Mammary epithelial cell (primary cell): ENCODE measurements at regions of chr4 and their contacts with region 1.

Region 1: GRCh38 chr4:38319456-38320342 is 344.3 kb upstream of the KLF3 start:
- DNase-seq: peak; percentile 84
- H3K4me3 ChIP-seq: no peak overlapping the region
- H3K27ac ChIP-seq: peak overlapping the region; percentile 79
- H3K4me1 ChIP-seq: peaks cover 26% of the 10 kb centered on the region
- H3K27me3 ChIP-seq: no peaks in the 10 kb centered on the region
- CTCF ChIP-seq: peak; percentile 98 to 99

Region 2: GRCh38 chr4:37826295-37827029 is 493.2 kb before region 1 on chr4 and contains the start of gene PGM2:
- CTCF ChIA-PET with region 1: no interaction called
- dilution Hi-C with region 1: no loop called
- in situ Hi-C with region 1: no loop called
- intact Hi-C with region 1: loop called (anchors 10 kb)
- DNase-seq: peak; percentile 83
- H3K4me3 ChIP-seq: peak within 1 kb of the TSS; percentile 73 to 97 (median 95)
- H3K27ac ChIP-seq: peak within 1 kb of the TSS; percentile 64
- H3K4me1 ChIP-seq: peaks cover 31% of the 10 kb centered on the region
- H3K27me3 ChIP-seq: no peaks in the 10 kb centered on the region
- CTCF ChIP-seq: no peak
- total RNA-seq, gene PGM2: 18.5 to 33.0 TPM

Region 3: DNA sequence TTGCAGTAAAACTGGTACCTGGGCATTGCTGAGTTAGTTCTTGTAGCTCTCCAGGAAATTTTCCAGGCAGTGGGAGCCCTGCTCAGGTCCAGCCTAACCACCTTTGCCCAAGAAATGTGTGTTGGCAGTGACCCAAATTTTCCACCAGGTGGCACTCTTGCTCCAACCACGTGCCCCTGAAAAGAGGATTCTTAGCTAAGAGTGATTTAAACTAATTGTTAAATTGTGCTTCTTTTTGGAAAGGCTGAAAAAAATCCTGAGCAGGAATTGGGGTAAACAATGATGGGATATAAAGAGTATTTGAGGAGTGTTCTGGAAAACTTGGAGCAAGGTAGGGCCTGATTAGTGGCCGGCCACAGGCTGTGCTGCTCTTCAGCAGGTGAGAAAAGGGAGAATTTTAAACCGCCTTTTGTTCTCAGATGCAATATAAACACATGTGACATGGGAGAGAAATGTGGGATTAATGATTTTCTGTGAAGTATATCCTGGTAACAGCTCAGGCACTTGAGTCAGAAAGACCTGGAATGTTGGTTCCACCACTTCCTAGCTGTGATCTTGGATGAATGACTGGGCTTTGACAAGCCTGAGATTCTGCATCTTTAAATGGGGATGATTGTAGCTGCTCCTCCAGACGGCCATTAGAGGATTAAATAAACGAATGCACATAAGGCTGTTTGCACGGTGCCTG is 139.9 kb before region 1 on chr4:
- CTCF ChIA-PET with region 1: interaction called, 4 read pairs
- dilution Hi-C with region 1: loop called (anchors 25 kb)
- in situ Hi-C with region 1: loop called (anchors 5 kb)
- intact Hi-C with region 1: loop called (anchors 1 kb)
- DNase-seq: peak; percentile 74
- H3K4me3 ChIP-seq: no peak overlapping the region
- H3K27ac ChIP-seq: peak overlapping the region; percentile 37
- H3K4me1 ChIP-seq: peaks cover 26% of the 10 kb centered on the region
- H3K27me3 ChIP-seq: no peaks in the 10 kb centered on the region
- CTCF ChIP-seq: peak; percentile 91 to 92

Region 4: GRCh38 chr4:38663801-38664705 is 344.4 kb after region 1 on chr4 and contains the start of gene KLF3:
- CTCF ChIA-PET with region 1: no interaction called
- dilution Hi-C with region 1: loop called (anchors 5 kb)
- in situ Hi-C with region 1: no loop called
- intact Hi-C with region 1: loop called (anchors 1 kb)
- DNase-seq: peak; percentile 89
- H3K4me3 ChIP-seq: peak within 1 kb of the TSS; percentile 73 to 92 (median 87)
- H3K27ac ChIP-seq: peak within 1 kb of the TSS; percentile 96
- H3K4me1 ChIP-seq: peaks cover 19% of the 10 kb centered on the region
- H3K27me3 ChIP-seq: no peaks in the 10 kb centered on the region
- CTCF ChIP-seq: no peak
- total RNA-seq, gene KLF3: 24.2 to 41.3 TPM

Region 5: GRCh38 chr4:38730830-38731646 is 411.3 kb after region 1 on chr4:
- CTCF ChIA-PET with region 1: no interaction called
- dilution Hi-C with region 1: no loop called
- in situ Hi-C with region 1: no loop called
- intact Hi-C with region 1: loop called (anchors 1 kb)
- DNase-seq: peak; percentile 86
- H3K4me3 ChIP-seq: no peak overlapping the region
- H3K27ac ChIP-seq: no peak overlapping the region
- H3K4me1 ChIP-seq: peaks cover 12% of the 10 kb centered on the region
- H3K27me3 ChIP-seq: no peaks in the 10 kb centered on the region
- CTCF ChIP-seq: peak; percentile 94 to 95